B cell (primary cell): ENCODE measurements at regions of chr5 and their contacts with region 1.

Region 1: GRCh38 chr5:78648359-78649210 is at the start of gene LHFPL2:
- DNase-seq: peak; percentile 73
- ATAC-seq: peak; percentile 74
- H3K4me3 ChIP-seq: peak within 1 kb of the TSS; percentile 43 to 72 (median 64)
- H3K4me3 Mint-ChIP-seq: peak within 1 kb of the TSS; percentile 91
- H3K27ac ChIP-seq: no peak within 1 kb of the TSS
- H3K27ac Mint-ChIP-seq: peak within 1 kb of the TSS; percentile 83
- H3K4me1 ChIP-seq: peaks cover 16 to 18% of the 10 kb centered on the region in 2 donors
- H3K4me1 Mint-ChIP-seq: peaks cover 26% of the 10 kb centered on the region
- H3K27me3 ChIP-seq: peaks cover 0 to 11% (median 6%) of the 10 kb centered on the region in 4 experiments
- H3K27me3 Mint-ChIP-seq: no peaks in the 10 kb centered on the region
- CTCF ChIP-seq: no peak
- total RNA-seq, gene LHFPL2: 33.0 and 35.5 TPM in 2 replicates

Region 2: DNA sequence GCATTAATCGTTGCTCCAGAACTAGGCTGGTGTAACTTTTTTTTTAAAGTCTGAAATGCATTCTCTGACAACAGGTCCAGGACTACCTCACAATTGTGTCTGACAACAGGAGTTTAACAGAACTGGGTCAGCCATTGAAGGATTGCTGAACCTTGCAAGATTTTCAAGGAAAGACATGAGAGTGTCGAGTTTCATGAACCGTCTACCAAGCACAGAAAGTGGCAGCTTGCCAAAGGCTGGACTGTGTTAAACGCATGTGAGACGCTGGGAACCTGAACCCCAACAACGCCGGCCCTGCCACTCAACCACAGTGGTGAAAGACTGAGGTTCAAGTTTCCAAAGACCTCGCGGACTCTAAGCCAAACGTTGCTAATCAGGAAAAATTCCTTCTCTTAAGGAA is 79.1 kb before region 1 on chr5:
- CTCF ChIA-PET with region 1: no interaction called
- POLR2A ChIA-PET with region 1: no interaction called
- intact Hi-C with region 1: no loop called
- DNase-seq: no peak
- ATAC-seq: no peak
- H3K4me3 ChIP-seq: no peak overlapping the region
- H3K4me3 Mint-ChIP-seq: no peak overlapping the region
- H3K27ac ChIP-seq: no peak overlapping the region
- H3K27ac Mint-ChIP-seq: no peak overlapping the region
- H3K4me1 ChIP-seq: peaks cover 17 to 30% of the 10 kb centered on the region in 2 donors
- H3K4me1 Mint-ChIP-seq: peaks cover 43% of the 10 kb centered on the region
- H3K27me3 ChIP-seq: no peaks in the 10 kb centered on the region
- H3K27me3 Mint-ChIP-seq: no peaks in the 10 kb centered on the region
- CTCF ChIP-seq: no peak

Region 3: GRCh38 chr5:78727786-78728761 is 79.5 kb after region 1 on chr5:
- CTCF ChIA-PET with region 1: interaction called, 6 read pairs
- POLR2A ChIA-PET with region 1: interaction called, 15 read pairs
- intact Hi-C with region 1: loop called (anchors 1 kb)
- DNase-seq: peak; percentile 88
- ATAC-seq: peak; percentile 84
- H3K4me3 ChIP-seq: peak overlapping the region in 3 of 5 experiments; percentile 16 to 30 (median 25)
- H3K4me3 Mint-ChIP-seq: peak overlapping the region; percentile 79
- H3K27ac ChIP-seq: peak overlapping the region; percentile 85 to 89
- H3K27ac Mint-ChIP-seq: peak overlapping the region; percentile 99
- H3K4me1 ChIP-seq: peaks cover 60 to 68% of the 10 kb centered on the region in 2 donors
- H3K4me1 Mint-ChIP-seq: peaks cover 67% of the 10 kb centered on the region
- H3K27me3 ChIP-seq: no peaks in the 10 kb centered on the region
- H3K27me3 Mint-ChIP-seq: no peaks in the 10 kb centered on the region
- CTCF ChIP-seq: no peak

Region 4: GRCh38 chr5:78747705-78748359 is 99.2 kb after region 1 on chr5:
- CTCF ChIA-PET with region 1: no interaction called
- POLR2A ChIA-PET with region 1: interaction called, 12 read pairs
- intact Hi-C with region 1: no loop called
- DNase-seq: no peak
- ATAC-seq: no peak
- H3K4me3 ChIP-seq: no peak overlapping the region
- H3K4me3 Mint-ChIP-seq: no peak overlapping the region
- H3K27ac ChIP-seq: no peak overlapping the region
- H3K27ac Mint-ChIP-seq: no peak overlapping the region
- H3K4me1 ChIP-seq: no peaks in the 10 kb centered on the region
- H3K4me1 Mint-ChIP-seq: no peaks in the 10 kb centered on the region
- H3K27me3 ChIP-seq: no peaks in the 10 kb centered on the region
- H3K27me3 Mint-ChIP-seq: no peaks in the 10 kb centered on the region
- CTCF ChIP-seq: no peak

Region 5: DNA sequence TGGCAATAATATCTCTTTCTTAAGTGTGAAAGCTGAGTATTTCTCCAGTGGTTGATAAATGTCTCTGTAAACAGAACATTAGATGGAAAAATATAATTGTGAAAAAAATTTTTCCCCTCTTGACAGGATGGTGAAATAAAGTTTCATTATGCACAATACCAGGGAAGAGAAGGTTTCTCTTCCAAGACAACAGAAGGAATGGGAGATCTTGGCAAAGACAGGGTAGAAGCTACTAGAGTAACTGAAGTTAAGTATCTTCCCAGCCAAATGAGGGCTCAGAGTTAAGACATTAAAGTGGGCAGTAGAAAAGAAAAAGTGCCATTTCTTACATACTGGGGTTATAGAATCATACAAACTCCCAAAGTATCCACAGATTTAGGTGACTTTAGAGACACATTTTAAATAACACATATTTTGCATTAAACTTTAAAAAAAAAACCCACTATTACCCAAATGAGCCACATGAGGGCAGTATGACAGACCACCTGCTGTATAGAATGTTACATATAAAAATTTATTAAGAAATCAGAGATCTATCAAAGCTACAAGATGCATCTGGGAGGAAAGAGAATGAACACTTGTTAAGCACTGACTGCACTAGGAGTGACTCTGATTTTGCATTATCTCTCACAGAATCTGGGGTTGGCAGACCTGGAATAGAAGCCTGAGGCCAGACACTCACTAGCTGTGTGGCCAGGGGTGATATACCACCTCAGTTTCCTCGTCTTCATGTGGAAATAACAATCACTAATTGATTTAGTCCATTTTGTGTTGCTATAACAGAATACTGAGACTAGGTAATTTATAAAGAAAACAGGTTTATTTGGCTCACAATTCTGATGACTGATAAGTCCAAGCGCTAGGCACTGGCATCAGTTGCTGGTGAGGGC is 238.0 kb after region 1 on chr5:
- CTCF ChIA-PET with region 1: interaction called, 12 read pairs
- POLR2A ChIA-PET with region 1: no interaction called
- intact Hi-C with region 1: loop called (anchors 2 kb)
- DNase-seq: peak; percentile 38
- ATAC-seq: no peak
- H3K4me3 ChIP-seq: no peak overlapping the region
- H3K4me3 Mint-ChIP-seq: no peak overlapping the region
- H3K27ac ChIP-seq: no peak overlapping the region
- H3K27ac Mint-ChIP-seq: peak overlapping the region; percentile 60
- H3K4me1 ChIP-seq: peaks cover 24 to 36% of the 10 kb centered on the region in 2 donors
- H3K4me1 Mint-ChIP-seq: peaks cover 36% of the 10 kb centered on the region
- H3K27me3 ChIP-seq: no peaks in the 10 kb centered on the region
- H3K27me3 Mint-ChIP-seq: no peaks in the 10 kb centered on the region
- CTCF ChIP-seq: peak; percentile 69